HEK293T (cell line): ENCODE measurements at regions of chr14 and their contacts with region 1.

Region 1: DNA sequence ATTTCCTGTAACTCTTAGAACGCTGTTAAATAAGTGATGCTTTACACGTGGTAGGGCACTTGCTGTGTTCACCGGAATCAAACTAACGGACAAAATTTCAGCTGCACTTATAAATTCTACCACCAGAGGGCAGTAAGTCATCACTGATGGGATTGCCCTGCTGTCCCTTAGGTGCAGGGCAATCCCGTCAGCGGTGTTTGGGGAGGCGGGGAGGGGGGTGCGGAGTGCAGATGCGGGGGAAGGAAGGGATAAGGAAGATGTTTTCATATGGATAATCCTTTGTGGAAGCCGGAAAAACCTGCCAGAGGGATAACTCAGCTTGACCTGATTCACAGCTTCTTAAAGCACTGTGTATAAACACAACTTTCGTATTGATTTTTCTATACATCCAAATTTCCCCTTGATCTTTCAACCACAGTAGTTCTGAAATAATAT is 21.7 kb upstream of the SLC10A1 start:
- DNase-seq: peak; percentile 81

Region 2: GRCh38 chr14:70073924-70074566 is 255.3 kb after region 1 on chr14:
- CTCF ChIA-PET with region 1: interaction called, 22 read pairs
- POLR2A ChIA-PET with region 1: no interaction called
- DNase-seq: peak; percentile 83